Adrenal gland (tissue), 19 donors: ENCODE measurements at regions of chr22 and their contacts with region 1.

Region 1: GRCh38 chr22:22959147-22959827 is 71.7 kb downstream of the IGLL5 start:
- DNase-seq: peak; percentile 78 to 92 (median 86)
- H3K4me3 ChIP-seq: no peak overlapping the region
- H3K27ac ChIP-seq: no peak overlapping the region
- H3K4me1 ChIP-seq: no peaks in the 10 kb centered on the region
- H3K27me3 ChIP-seq: peaks cover 4% of the 10 kb centered on the region
- CTCF ChIP-seq: peak; percentile 89 to 100 (median 99)
- POLR2A ChIP-seq: no peak

Region 2: DNA sequence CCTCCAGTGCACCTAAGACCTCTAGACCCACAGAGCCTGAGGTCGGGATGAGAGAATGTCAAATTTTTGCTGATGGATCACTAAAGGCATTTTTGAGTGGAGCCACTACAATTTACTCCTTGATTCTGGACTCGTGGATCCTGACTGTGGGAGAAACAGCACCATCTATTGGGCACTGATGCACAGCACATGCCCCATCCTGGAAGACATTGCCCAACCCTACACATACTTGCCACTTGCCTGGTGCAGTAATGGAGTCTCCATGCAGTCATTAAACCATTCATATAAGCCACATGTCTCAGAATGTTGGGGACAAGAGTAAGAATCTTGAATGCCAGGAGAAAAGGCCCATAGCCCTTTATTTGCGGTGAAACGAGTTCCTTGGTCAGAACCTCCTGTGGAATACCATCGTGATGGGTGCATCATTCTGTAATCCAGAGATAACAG is 211.0 kb before region 1 on chr22:
- intact Hi-C with region 1: loop called in 1 of 2 experiments (anchors 10 kb)
- DNase-seq: peak; percentile 43 to 85 (median 67)
- H3K4me3 ChIP-seq: no peak overlapping the region
- H3K27ac ChIP-seq: no peak overlapping the region
- H3K4me1 ChIP-seq: no peaks in the 10 kb centered on the region
- H3K27me3 ChIP-seq: no peaks in the 10 kb centered on the region
- CTCF ChIP-seq: peak; percentile 13 to 72 (median 51)
- POLR2A ChIP-seq: no peak

Region 3: GRCh38 chr22:22848364-22848866 is 110.9 kb before region 1 on chr22:
- intact Hi-C with region 1: loop called (anchors 5 to 10 kb)
- DNase-seq: peak; percentile 45 to 74 (median 65)
- H3K4me3 ChIP-seq: no peak overlapping the region
- H3K27ac ChIP-seq: no peak overlapping the region
- H3K4me1 ChIP-seq: no peaks in the 10 kb centered on the region
- H3K27me3 ChIP-seq: no peaks in the 10 kb centered on the region
- CTCF ChIP-seq: peak; percentile 62 to 92 (median 76)
- POLR2A ChIP-seq: no peak

Region 4: DNA sequence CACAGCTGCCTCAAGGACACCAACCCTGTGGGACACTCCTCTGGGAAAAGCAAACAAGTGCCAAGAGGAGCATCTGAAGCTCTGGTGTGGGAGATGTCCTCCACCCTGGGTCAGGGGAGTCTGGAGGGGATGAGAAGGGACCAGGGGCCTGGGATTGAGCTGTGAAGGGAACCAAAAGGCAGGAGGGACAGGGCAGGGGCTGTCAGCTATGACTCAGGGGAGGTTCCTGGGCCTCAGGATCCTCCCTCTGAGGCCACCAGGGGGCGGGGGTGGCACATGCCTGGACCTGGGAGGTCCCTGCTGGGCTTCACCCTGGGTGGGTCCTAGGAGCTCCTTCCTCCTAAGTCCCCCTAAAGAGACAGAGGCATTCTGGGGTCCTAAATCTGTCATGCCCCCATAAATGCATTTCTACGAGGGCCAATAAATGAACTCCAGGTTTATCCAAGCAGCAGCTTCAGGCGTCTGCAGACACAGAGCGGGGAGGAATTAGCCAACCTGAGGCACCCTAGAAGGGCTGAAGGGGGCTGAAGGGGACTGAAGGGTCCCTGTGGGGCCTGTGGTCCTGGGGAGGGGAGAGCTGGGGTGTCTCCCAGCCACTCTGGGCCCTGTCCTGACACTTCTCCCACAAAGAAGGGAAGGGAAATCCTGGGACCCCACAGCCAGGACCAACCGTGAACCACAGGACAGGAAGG is 103.5 kb before region 1 on chr22:
- intact Hi-C with region 1: loop called in 1 of 2 experiments (anchors 10 kb)
- DNase-seq: no peak
- H3K4me3 ChIP-seq: no peak overlapping the region
- H3K27ac ChIP-seq: no peak overlapping the region
- H3K4me1 ChIP-seq: no peaks in the 10 kb centered on the region
- H3K27me3 ChIP-seq: no peaks in the 10 kb centered on the region
- CTCF ChIP-seq: peak in 1 of 6 experiments; percentile 36
- POLR2A ChIP-seq: no peak

Region 5: GRCh38 chr22:23054531-23055257 is 95.4 kb after region 1 on chr22:
- intact Hi-C with region 1: no loop called
- DNase-seq: peak in 1 of 7 donors; percentile 25
- H3K4me3 ChIP-seq: no peak overlapping the region
- H3K27ac ChIP-seq: no peak overlapping the region
- H3K4me1 ChIP-seq: no peaks in the 10 kb centered on the region
- H3K27me3 ChIP-seq: no peaks in the 10 kb centered on the region
- CTCF ChIP-seq: no peak
- POLR2A ChIP-seq: no peak

Region 6: GRCh38 chr22:23126165-23127054 is 167.1 kb after region 1 on chr22:
- intact Hi-C with region 1: loop called in 1 of 2 experiments (anchors 2 kb)
- DNase-seq: peak in 4 of 7 donors; percentile 44 to 64 (median 54)
- H3K4me3 ChIP-seq: no peak overlapping the region
- H3K27ac ChIP-seq: no peak overlapping the region
- H3K4me1 ChIP-seq: peaks cover 10 to 11% of the 10 kb centered on the region in 2 donors
- H3K27me3 ChIP-seq: no peaks in the 10 kb centered on the region
- CTCF ChIP-seq: no peak
- POLR2A ChIP-seq: no peak

Region 7: DNA sequence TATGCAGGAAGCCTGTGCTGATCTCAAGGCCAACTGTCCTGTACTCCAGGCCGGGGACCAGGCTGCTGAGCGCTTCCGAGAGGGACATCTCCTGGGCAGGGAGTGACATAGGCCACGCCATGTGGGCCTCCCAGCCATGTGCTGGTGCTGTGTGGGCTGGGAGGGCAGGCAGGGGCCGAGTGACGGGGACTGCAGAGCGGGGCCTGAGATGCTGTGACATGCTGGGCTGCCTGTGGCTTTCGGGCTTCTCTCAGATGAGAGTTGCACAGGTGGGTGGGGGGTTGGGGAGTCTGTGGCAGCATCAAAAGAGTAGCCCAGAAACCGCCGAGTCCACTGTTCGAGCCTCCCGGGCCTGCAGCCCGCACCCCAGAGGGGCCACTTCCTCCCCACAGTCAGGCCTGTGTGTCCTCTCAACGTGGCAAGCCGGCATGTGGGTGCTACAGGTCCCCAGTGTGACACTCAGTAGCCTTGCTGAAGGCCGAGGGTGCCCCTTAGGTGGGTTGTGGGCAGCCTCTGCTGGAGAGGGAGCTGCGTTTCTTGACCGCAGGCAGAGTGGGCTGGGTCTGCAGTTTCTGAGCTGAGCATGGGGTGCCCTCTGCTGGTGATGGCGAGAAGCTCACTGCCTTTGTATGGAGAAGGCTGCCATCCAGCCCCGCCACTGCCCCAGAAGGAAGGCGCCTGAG is 322.3 kb after region 1 on chr22:
- intact Hi-C with region 1: loop called in 1 of 2 experiments (anchors 5 kb)
- DNase-seq: peak; percentile 72 to 94 (median 82)
- H3K4me3 ChIP-seq: no peak overlapping the region
- H3K27ac ChIP-seq: peak overlapping the region in 3 of 5 donors; percentile 41 to 80 (median 66)
- H3K4me1 ChIP-seq: peaks cover 0 to 11% of the 10 kb centered on the region in 2 donors
- H3K27me3 ChIP-seq: no peaks in the 10 kb centered on the region
- CTCF ChIP-seq: peak; percentile 87 to 98 (median 94)
- POLR2A ChIP-seq: peak in 1 of 2 donors; percentile 6